ENCODE measurements at regions of chr17 and their contacts with region 1.

Region 1: DNA sequence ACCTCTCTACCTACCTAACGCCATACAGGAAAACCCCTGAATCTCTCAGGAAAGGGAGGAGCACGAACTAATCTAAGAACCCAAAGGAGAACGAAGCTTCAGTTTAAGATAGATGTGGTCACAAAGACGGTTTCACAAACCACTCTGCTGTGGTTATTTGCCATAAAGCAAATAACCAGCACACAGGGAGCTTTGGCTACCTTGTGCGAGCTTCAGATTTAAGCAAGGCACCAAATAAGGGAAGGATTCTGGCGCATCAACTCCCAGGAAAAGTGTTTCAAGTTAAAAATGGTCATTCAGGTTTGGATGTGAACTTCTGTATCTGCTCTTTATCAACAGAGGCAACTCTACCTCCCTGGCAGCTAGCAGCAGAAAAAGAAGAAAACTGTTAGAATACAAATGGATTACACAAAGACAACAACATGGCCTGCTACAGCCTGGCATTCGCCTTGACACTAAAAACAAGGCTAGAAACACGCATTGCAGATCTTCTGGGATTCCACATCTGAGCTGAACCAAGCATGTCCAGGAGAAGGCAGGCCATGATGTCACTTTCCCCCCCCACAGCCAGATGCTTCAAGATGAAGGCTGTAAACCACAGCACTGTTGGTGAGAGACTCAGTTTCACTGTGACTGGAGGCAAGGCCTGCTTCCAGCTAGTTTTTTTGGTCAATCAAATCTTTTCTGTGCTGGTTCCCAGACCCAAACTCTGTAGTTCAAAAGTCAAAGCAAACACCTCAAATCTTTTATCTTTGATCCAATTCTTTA is 43.6 kb downstream of the SMG6 start:
- DNase-seq: peak in 34 of 35 experiments; percentile 8 to 83 (median 46)
- ATAC-seq: peak; percentile 58 to 82 (median 65)
- H3K4me3 ChIP-seq: peak overlapping the region in 1 of 2 donors; percentile 11
- H3K4me3 Mint-ChIP-seq: peak overlapping the region; percentile 58 to 72 (median 63)
- H3K27ac ChIP-seq: peak overlapping the region; percentile 92
- H3K27ac Mint-ChIP-seq: peak overlapping the region; percentile 93 to 97
- H3K4me1 ChIP-seq: peaks cover 51 to 70% of the 10 kb centered on the region in 2 experiments
- H3K4me1 Mint-ChIP-seq: peaks cover 68 to 73% (median 70%) of the 10 kb centered on the region in 3 donors
- H3K27me3 ChIP-seq: no peaks in the 10 kb centered on the region
- H3K27me3 Mint-ChIP-seq: no peaks in the 10 kb centered on the region

Region 2: DNA sequence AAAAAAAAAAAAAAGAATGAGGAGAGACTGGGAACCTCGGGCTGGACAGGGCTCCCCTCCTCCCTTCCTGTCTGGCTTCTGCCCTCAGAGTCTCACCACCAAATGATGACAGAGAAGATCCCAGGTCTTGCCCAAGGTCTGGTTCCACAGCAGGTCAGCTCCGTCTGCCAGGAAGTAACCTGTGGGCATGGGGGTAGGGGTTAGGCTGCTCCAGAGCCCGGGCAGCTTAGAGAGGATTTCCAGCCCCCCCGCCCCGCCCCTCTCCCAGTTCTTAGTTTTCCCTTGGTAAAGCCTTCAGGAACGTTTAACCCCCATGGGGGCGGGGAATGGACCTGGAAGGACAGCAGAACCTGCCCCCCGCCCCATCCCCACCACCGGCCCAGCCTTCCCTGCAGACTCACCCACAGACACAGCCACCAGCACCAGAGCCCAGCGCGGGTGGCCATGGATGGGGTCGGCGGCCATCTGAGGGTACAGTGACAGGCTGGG is 550.5 kb before region 1 on chr17:
- CTCF ChIA-PET with region 1: no interaction called
- POLR2A ChIA-PET with region 1: interaction called in 1 of 2 experiments, 11 read pairs
- DNase-seq: no peak
- ATAC-seq: peak in 1 of 4 experiments; percentile 15
- H3K4me3 ChIP-seq: peak overlapping the region in 1 of 2 donors; percentile 53
- H3K4me3 Mint-ChIP-seq: peak overlapping the region; percentile 31 to 77 (median 44)
- H3K27ac ChIP-seq: no peak overlapping the region
- H3K27ac Mint-ChIP-seq: no peak overlapping the region
- H3K4me1 ChIP-seq: peaks cover 14 to 47% of the 10 kb centered on the region in 2 experiments
- H3K4me1 Mint-ChIP-seq: peaks cover 17 to 39% (median 19%) of the 10 kb centered on the region in 3 donors
- H3K27me3 ChIP-seq: peaks cover 4 to 49% of the 10 kb centered on the region in 2 experiments
- H3K27me3 Mint-ChIP-seq: peaks cover 8 to 23% of the 10 kb centered on the region in 2 donors

Measured in T-cell (primary cell).